ENCODE measurements at regions of chr11 and their contacts with region 1.

Region 1: GRCh38 chr11:30143098-30143705 is 87.6 kb upstream of the FSHB start:
- DNase-seq: no peak
- H3K4me3 ChIP-seq: no peak overlapping the region
- H3K27ac ChIP-seq: no peak overlapping the region
- H3K4me1 ChIP-seq: no peaks in the 10 kb centered on the region
- H3K27me3 ChIP-seq: no peaks in the 10 kb centered on the region; a peak in 1 of 7 replicates
- CTCF ChIP-seq: peak in 2 of 3 experiments; percentile 50 to 74; a peak in 3 of 4 replicates
- EP300 ChIP-seq: no peak
- POLR2A ChIP-seq: no peak
- RAD21 ChIP-seq: peak; percentile 68 to 70

Region 2: GRCh38 chr11:29432719-29433325 is 710.4 kb before region 1 on chr11:
- CTCF ChIA-PET with region 1: interaction called, 15 read pairs
- POLR2A ChIA-PET with region 1: no interaction called
- DNase-seq: no peak
- H3K4me3 ChIP-seq: no peak overlapping the region
- H3K27ac ChIP-seq: no peak overlapping the region
- H3K4me1 ChIP-seq: no peaks in the 10 kb centered on the region
- H3K27me3 ChIP-seq: no peaks in the 10 kb centered on the region
- CTCF ChIP-seq: peak in 1 of 3 experiments; percentile 31; a peak in 2 of 4 replicates
- EP300 ChIP-seq: no peak
- POLR2A ChIP-seq: no peak
- RAD21 ChIP-seq: peak; percentile 49 to 58

Region 3: DNA sequence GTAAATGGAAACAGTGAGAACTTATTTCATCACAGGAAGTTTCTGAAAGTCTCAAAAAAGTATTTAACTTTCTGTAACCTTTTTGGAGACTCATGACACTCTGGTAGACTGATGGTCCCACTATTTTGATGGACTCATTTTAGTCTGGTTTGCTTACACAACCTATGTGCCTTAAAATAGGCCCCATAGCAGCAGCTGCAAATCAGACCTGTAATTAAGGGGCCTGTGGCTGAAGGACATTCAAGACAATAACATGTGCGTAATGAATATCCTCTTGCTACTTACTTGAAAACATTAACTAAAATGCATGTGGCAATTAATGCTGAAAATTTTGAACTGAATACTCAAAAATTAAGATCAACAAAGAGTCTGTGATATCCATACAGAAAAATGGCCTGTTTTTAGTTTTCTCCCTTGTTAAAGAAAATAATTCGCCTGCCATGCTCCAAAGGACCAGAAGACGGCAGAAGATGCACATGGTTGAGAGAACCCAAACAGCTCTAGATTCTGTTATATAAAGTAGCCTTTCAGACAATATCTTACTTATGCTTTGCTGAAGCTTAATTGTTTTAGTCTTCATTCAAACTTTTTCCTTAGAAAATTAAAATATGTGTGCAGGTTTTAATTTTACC is 694.8 kb before region 1 on chr11:
- CTCF ChIA-PET with region 1: interaction called, 13 read pairs
- POLR2A ChIA-PET with region 1: no interaction called
- DNase-seq: no peak
- H3K4me3 ChIP-seq: no peak overlapping the region
- H3K27ac ChIP-seq: no peak overlapping the region
- H3K4me1 ChIP-seq: no peaks in the 10 kb centered on the region
- H3K27me3 ChIP-seq: no peaks in the 10 kb centered on the region
- CTCF ChIP-seq: peak in 2 of 3 experiments; percentile 54 to 68; a peak in 3 of 4 replicates
- EP300 ChIP-seq: no peak
- POLR2A ChIP-seq: no peak
- RAD21 ChIP-seq: peak; percentile 88 to 92

Region 4: DNA sequence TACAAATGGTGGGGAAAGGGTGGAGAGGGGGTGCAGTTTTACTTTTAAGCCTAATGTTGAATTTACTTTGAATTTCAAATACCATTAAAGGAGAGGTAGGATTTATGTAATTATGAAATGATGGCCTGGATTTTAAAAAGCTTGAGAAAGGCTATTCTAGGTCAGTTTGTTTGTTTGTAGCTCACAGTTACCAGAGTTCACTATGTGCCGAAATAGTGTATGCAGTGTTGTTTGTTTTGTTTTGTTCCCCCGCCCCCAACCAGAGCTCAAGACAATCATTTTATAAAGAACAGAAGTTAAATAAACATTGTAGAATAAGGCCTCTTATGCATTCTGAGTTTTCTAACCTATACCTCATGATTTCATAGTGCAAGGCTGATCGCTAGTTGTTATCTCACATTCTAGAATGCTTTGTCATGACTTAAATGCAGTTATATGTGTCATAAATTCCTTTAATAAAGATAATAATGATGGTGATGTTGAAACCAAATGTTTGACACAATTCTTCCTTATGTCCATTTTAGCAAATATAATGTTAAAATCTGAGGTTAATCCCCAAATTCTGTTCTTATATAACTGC is 134.2 kb before region 1 on chr11:
- CTCF ChIA-PET with region 1: no interaction called
- POLR2A ChIA-PET with region 1: no interaction called
- DNase-seq: no peak
- H3K4me3 ChIP-seq: no peak overlapping the region
- H3K27ac ChIP-seq: no peak overlapping the region
- H3K4me1 ChIP-seq: no peaks in the 10 kb centered on the region
- H3K27me3 ChIP-seq: peaks cover under 1 to 17% (median 2%) of the 10 kb centered on the region in 4 experiments; a peak in 6 of 7 replicates
- CTCF ChIP-seq: no peak
- EP300 ChIP-seq: no peak
- POLR2A ChIP-seq: no peak
- RAD21 ChIP-seq: no peak

Region 5: DNA sequence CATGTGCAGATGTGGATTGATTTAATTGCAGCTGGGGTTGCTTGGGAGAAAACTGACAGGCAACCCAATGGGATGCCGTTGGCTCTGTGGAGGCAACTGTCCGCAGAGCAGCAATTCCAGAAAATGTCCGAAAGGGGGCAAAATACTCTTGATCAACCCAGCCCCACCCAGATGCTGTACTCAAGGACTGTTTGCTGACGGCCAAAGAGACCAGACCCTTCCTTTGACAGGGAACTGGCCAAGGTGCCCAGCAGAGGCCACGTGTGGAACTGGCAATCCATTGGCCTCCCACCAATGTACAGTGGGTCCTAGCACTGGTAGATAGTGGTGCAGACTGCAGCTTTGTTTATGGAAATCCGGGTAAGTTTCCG is 96.6 kb before region 1 on chr11:
- CTCF ChIA-PET with region 1: interaction called, 24 read pairs
- POLR2A ChIA-PET with region 1: no interaction called
- DNase-seq: peak in 1 of 2 experiments; percentile 69
- H3K4me3 ChIP-seq: no peak overlapping the region
- H3K27ac ChIP-seq: no peak overlapping the region
- H3K4me1 ChIP-seq: no peaks in the 10 kb centered on the region
- H3K27me3 ChIP-seq: no peaks in the 10 kb centered on the region
- CTCF ChIP-seq: peak; percentile 59 to 71 (median 62)
- EP300 ChIP-seq: no peak
- POLR2A ChIP-seq: no peak
- RAD21 ChIP-seq: peak; percentile 51 to 65

Region 6: GRCh38 chr11:30155428-30155827 is 12.2 kb after region 1 on chr11:
- CTCF ChIA-PET with region 1: interaction called, 27 read pairs
- POLR2A ChIA-PET with region 1: no interaction called
- DNase-seq: no peak
- H3K4me3 ChIP-seq: no peak overlapping the region
- H3K27ac ChIP-seq: no peak overlapping the region
- H3K4me1 ChIP-seq: no peaks in the 10 kb centered on the region
- H3K27me3 ChIP-seq: no peaks in the 10 kb centered on the region
- CTCF ChIP-seq: no peak
- EP300 ChIP-seq: no peak
- POLR2A ChIP-seq: no peak
- RAD21 ChIP-seq: no peak

Region 7: GRCh38 chr11:30196400-30197206 is 53.4 kb after region 1 on chr11:
- CTCF ChIA-PET with region 1: interaction called, 20 read pairs
- POLR2A ChIA-PET with region 1: no interaction called
- DNase-seq: peak; percentile 49 to 89
- H3K4me3 ChIP-seq: no peak overlapping the region
- H3K27ac ChIP-seq: no peak overlapping the region
- H3K4me1 ChIP-seq: peaks cover 0 to 3% (median 0%) of the 10 kb centered on the region in 4 experiments; a peak in 1 of 7 replicates
- H3K27me3 ChIP-seq: no peaks in the 10 kb centered on the region
- CTCF ChIP-seq: peak; percentile 84 to 96 (median 94)
- EP300 ChIP-seq: no peak
- POLR2A ChIP-seq: no peak
- RAD21 ChIP-seq: peak; percentile 83 to 90